ENCODE measurements at regions of chr2 and their contacts with region 1.

Region 1: GRCh38 chr2:241355983-241356870 is at the start of gene FARP2:
- DNase-seq: peak; percentile 100
- H3K4me3 ChIP-seq: peak within 1 kb of the TSS; percentile 65 to 91 (median 74)
- H3K27ac ChIP-seq: peak within 1 kb of the TSS; percentile 91 to 98 (median 97)
- H3K4me1 ChIP-seq: peaks cover 0 to 29% (median 23%) of the 10 kb centered on the region in 4 donors
- H3K27me3 ChIP-seq: no peaks in the 10 kb centered on the region
- CTCF ChIP-seq: no peak
- EP300 ChIP-seq: no peak
- POLR2A ChIP-seq: no peak
- total RNA-seq, gene FARP2: 19.3 to 32.6 (median 28.1) TPM

Region 2: GRCh38 chr2:241149925-241150659 is 206.1 kb before region 1 on chr2 and contains the start of gene PPP1R7:
- intact Hi-C with region 1: loop called (anchors 2 kb)
- DNase-seq: peak; percentile 97
- H3K4me3 ChIP-seq: peak within 1 kb of the TSS; percentile 74 to 98 (median 92)
- H3K27ac ChIP-seq: peak within 1 kb of the TSS; percentile 77 to 90 (median 86)
- H3K4me1 ChIP-seq: peaks cover 0 to 30% (median 15%) of the 10 kb centered on the region in 4 donors
- H3K27me3 ChIP-seq: no peaks in the 10 kb centered on the region
- CTCF ChIP-seq: no peak
- EP300 ChIP-seq: no peak
- POLR2A ChIP-seq: peak in 1 of 2 donors; percentile 48
- total RNA-seq, gene PPP1R7: 41.3 to 63.5 (median 56.8) TPM

Region 3: DNA sequence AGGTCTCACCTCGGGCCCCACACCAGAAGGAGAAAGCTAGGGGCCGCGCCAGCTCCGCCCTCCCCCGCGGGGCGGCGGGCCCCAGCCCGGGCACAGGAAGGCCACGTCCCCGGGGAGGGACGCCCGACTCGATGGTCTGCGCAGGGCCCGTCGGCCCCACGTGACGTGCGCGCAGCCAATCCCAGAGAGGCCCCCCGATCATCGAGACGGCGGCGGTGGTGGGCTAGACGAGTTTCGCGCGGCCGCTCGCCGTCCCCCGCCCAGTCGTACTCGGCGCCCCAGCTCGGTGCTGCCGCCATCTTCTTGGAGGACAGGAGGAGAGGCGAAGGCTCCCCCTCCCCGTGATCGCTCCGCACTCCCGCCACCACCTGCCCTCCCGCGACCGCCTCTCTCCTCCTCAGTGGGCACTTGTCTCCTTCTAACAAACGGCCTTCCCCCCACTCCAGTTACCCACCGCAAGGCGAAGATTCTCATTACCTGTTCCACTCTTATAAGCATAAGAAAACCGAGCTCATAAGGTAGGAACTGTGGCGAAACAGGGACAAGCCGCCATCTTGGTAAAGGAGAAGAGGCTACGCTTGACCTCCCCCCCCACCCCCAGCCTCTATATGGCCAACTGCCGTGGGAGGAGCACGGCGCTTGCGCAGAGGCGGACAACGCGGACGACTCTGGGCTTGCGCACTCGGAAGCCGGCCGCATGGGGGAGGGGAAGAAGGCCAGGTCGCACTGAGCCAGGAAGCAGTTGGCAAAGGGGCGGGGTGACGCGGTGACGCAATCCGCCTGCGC is 40.9 kb before region 1 on chr2 and contains the start of gene HDLBP:
- intact Hi-C with region 1: loop called (anchors 1 kb)
- DNase-seq: peak; percentile 99
- H3K4me3 ChIP-seq: peak within 1 kb of the TSS; percentile 73 to 93 (median 89)
- H3K27ac ChIP-seq: peak within 1 kb of the TSS; percentile 97 to 99 (median 98)
- H3K4me1 ChIP-seq: peaks cover 0 to 69% (median 55%) of the 10 kb centered on the region in 4 donors
- H3K27me3 ChIP-seq: no peaks in the 10 kb centered on the region
- CTCF ChIP-seq: no peak
- EP300 ChIP-seq: peak in 1 of 4 donors; percentile 80
- POLR2A ChIP-seq: peak; percentile 52 to 69
- total RNA-seq, gene HDLBP: 201 to 281 (median 247) TPM

Region 4: DNA sequence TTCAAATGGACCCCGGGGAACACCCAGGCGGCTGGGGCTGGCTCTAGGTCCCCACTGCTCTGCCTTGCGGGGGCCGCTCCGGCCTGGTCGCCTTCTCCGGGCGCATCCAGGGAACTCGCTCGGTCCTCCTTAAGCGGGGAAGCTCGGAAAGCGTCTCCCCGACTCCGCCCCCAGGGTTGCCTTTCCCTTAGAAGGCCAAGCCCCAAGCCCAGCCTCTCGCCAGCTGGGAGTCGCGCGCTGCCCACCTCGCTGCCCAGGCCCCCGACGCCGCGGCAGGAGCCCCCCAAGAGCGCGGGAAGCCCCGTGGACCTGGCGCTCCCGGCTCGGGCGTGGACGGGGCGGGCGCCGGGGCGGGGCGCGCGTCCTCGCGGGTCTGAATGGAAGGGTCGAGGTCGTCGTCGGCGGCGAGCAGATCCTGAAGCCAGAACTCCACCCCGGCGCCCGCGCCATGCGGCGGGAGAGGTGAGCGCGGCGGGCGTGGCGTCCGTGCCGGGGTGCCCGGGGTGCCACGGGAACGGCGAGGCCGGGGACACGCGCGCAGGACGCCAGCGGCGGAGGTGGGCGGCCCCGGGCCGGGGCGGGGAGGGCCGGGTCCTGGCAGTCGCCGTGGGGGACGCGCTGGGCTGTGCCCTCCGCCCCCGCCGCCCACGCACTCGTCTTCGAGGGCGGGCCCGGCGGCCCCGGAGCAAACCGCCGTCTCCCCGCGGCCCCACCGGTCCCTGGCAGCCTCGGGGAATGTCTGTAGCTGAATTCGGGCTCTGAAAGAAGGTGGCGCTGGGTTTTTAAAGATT is 202.5 kb after region 1 on chr2 and contains the start of gene BOK:
- intact Hi-C with region 1: loop called (anchors 5 kb)
- DNase-seq: peak; percentile 93
- H3K4me3 ChIP-seq: peak within 1 kb of the TSS; percentile 57 to 87 (median 70)
- H3K27ac ChIP-seq: peak within 1 kb of the TSS; percentile 80 to 94 (median 90)
- H3K4me1 ChIP-seq: peaks cover 0 to 52% (median 48%) of the 10 kb centered on the region in 4 donors
- H3K27me3 ChIP-seq: no peaks in the 10 kb centered on the region
- CTCF ChIP-seq: no peak
- EP300 ChIP-seq: no peak
- POLR2A ChIP-seq: no peak
- total RNA-seq, gene BOK: 46.6 to 112 (median 81.0) TPM

Region 5: DNA sequence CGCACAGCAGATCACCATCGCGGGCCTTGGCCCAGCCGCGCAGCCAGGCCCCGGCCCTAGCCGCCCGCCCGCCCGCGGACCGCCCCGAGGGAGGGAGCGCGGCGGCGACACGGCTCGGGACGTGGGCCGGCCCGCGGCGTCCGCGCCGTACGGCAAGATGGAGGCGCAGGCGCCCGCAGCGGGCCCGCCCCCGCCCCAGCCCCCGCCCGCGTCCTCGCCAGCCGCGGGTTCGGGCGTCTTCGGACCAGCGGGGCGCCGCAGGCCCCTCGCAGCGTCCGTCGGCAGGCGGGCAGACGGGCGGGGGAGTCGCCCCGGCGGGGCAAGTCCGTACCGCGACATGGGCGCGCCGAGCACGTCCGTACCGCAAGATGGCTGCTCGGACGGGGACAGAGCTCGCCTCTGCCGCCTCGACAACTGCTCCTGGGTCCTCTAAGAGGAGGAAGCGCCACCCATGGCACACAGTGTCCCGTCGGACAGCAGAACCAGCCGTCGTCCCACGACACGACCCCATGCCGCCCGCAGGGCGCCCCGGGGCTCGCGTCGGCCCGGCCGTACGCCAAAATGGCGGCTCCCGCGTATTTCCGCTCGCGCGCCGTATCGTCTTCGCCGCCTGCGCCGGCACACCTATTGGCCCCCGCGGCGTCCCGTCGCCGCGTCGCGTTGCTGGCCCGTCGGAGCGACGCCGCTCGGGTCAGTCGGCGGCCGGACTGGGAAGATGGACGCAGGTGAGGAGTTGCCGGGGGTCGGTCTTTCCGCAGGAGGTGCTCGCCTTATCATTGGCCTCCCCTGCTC is 281.0 kb after region 1 on chr2 and contains the starts of genes ATG4B and THAP4:
- intact Hi-C with region 1: loop called (anchors 10 kb)
- DNase-seq: peak; percentile 91
- H3K4me3 ChIP-seq: peak within 1 kb of the TSS; percentile 57 to 95 (median 81)
- H3K27ac ChIP-seq: peak within 1 kb of the TSS; percentile 90 to 99 (median 94)
- H3K4me1 ChIP-seq: peaks cover 0 to 66% (median 59%) of the 10 kb centered on the region in 4 donors
- H3K27me3 ChIP-seq: no peaks in the 10 kb centered on the region
- CTCF ChIP-seq: no peak
- EP300 ChIP-seq: no peak
- POLR2A ChIP-seq: peak; percentile 25 to 41
- total RNA-seq, gene ATG4B: 35.2 to 69.8 (median 45.2) TPM
- total RNA-seq, gene THAP4: 28.9 to 44.7 (median 38.4) TPM

Measured in sigmoid colon (tissue), 7 donors.